ENCODE measurements at regions of chr14 and their contacts with region 1.

Region 1: GRCh38 chr14:58177125-58177524 is 22.8 kb upstream of the ACTR10 start:
- H3K4me3 ChIP-seq: no peak overlapping the region
- H3K27ac ChIP-seq: no peak overlapping the region
- H3K4me1 ChIP-seq: no peaks in the 10 kb centered on the region
- CTCF ChIP-seq: no peak

Region 2: GRCh38 chr14:57822081-57822480 is 355.0 kb before region 1 on chr14:
- CTCF ChIA-PET with region 1: no interaction called
- POLR2A ChIA-PET with region 1: no interaction called
- H3K4me3 ChIP-seq: no peak overlapping the region
- H3K27ac ChIP-seq: no peak overlapping the region
- H3K4me1 ChIP-seq: no peaks in the 10 kb centered on the region
- CTCF ChIP-seq: no peak

Region 3: DNA sequence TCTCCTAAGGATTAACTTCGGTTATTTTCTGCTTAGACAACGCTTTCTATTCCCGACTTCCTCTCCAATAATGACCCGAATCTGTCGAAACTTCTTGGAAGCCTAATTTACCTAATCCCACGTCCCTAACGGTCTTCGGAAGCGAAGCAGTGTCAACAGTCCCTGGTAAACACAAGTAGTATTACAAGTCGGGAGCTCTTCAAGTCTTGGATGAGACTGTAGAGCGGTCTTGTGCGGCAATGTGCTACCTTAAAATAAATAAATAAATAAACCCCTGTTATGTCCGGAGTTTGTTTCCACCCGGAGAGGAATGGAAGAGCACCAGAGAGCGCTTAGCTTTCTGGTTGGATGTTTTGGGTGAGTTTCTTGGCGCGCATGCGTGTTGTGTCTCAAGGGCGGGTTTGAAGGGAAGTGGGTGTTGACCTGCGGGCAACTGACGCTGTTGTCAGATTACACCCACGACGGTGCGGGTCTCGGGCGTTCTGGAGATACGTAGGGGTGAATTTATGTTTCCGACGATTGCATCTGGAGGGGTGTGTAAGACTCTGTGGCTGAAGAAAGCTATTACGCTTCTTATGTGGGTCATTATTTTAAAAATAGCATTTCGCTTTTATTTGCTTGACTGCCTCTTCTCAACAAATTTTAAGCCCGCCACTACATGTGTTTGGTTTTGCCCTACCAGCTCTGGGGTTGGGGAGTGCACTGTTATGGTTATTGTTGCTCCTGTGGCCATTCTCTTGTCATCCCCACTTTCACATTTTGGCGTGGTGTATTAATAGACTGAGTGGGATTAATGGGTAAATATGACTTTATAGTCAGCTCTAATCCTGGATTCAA is 250.4 kb after region 1 on chr14 and contains the starts of genes KIAA0586 and TIMM9:
- CTCF ChIA-PET with region 1: no interaction called
- POLR2A ChIA-PET with region 1: interaction called, 10 read pairs
- H3K4me3 ChIP-seq: peak within 1 kb of the TSS; percentile 65
- H3K27ac ChIP-seq: peak within 1 kb of the TSS; percentile 81
- H3K4me1 ChIP-seq: no peaks in the 10 kb centered on the region
- CTCF ChIP-seq: no peak

Measured in HEK293 (cell line).